PC-3 (cell line): ENCODE measurements at regions of chr16 and their contacts with region 1.

Region 1: GRCh38 chr16:72467157-72467759 is 295.3 kb upstream of the PMFBP1 start:
- DNase-seq: peak; percentile 54
- ATAC-seq: peak; percentile 60
- H3K4me3 ChIP-seq: no peak overlapping the region
- H3K27ac ChIP-seq: no peak overlapping the region
- H3K4me1 ChIP-seq: no peaks in the 10 kb centered on the region
- H3K27me3 ChIP-seq: no peaks in the 10 kb centered on the region
- CTCF ChIP-seq: peak; percentile 70

Region 2: GRCh38 chr16:72124761-72125634 is 342.3 kb before region 1 on chr16:
- CTCF ChIA-PET with region 1: no interaction called
- POLR2A ChIA-PET with region 1: no interaction called
- intact Hi-C with region 1: loop called (anchors 1 kb)
- DNase-seq: peak; percentile 61
- ATAC-seq: peak; percentile 86
- H3K4me3 ChIP-seq: no peak overlapping the region
- H3K27ac ChIP-seq: no peak overlapping the region
- H3K4me1 ChIP-seq: no peaks in the 10 kb centered on the region
- H3K27me3 ChIP-seq: no peaks in the 10 kb centered on the region
- CTCF ChIP-seq: peak; percentile 76

Region 3: GRCh38 chr16:72241930-72242329 is 225.3 kb before region 1 on chr16:
- CTCF ChIA-PET with region 1: no interaction called
- POLR2A ChIA-PET with region 1: no interaction called
- intact Hi-C with region 1: loop called (anchors 1 kb)
- DNase-seq: peak; percentile 62
- ATAC-seq: peak; percentile 87
- H3K4me3 ChIP-seq: no peak overlapping the region
- H3K27ac ChIP-seq: no peak overlapping the region
- H3K4me1 ChIP-seq: peaks cover 2% of the 10 kb centered on the region; the same call in 1 of the 2 replicates
- H3K27me3 ChIP-seq: no peaks in the 10 kb centered on the region
- CTCF ChIP-seq: peak; percentile 73

Region 4: DNA sequence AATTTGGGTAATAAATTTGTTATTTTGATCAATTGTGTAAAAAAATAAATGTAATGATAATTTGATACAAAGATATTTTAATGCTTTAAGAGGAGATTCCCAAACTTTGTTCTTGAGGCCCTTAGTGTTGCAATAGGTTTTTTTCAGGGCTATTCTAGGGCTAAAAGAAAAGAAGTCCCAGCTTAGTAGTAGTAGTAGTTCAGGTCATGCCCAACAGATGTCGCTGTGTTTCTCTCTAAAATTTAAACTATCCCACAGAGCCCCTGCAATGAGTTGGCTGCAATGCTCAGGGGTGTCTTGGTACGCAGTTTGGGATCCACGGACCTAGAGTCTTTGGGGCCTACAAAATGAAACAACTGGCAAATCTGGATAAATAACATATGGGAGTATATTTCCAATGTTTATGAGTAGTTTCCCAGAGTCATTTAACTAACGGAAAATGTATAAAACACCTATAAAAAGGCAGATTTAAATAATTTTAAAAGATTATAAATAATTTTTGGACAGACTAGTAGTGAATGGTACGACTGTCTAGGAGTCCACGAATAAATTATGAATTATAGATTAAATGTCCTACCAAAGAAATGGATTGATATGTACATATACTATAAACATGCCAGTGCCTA is 66.9 kb before region 1 on chr16:
- CTCF ChIA-PET with region 1: interaction called, 6 read pairs
- POLR2A ChIA-PET with region 1: no interaction called
- intact Hi-C with region 1: loop called (anchors 1 kb)
- DNase-seq: peak; percentile 58
- ATAC-seq: peak; percentile 67
- H3K4me3 ChIP-seq: no peak overlapping the region
- H3K27ac ChIP-seq: no peak overlapping the region
- H3K4me1 ChIP-seq: no peaks in the 10 kb centered on the region
- H3K27me3 ChIP-seq: no peaks in the 10 kb centered on the region
- CTCF ChIP-seq: peak; percentile 70

Region 5: GRCh38 chr16:72434159-72434558 is 33.1 kb before region 1 on chr16:
- CTCF ChIA-PET with region 1: no interaction called
- POLR2A ChIA-PET with region 1: no interaction called
- intact Hi-C with region 1: no loop called
- DNase-seq: no peak
- ATAC-seq: no peak
- H3K4me3 ChIP-seq: no peak overlapping the region
- H3K27ac ChIP-seq: no peak overlapping the region
- H3K4me1 ChIP-seq: no peaks in the 10 kb centered on the region
- H3K27me3 ChIP-seq: no peaks in the 10 kb centered on the region
- CTCF ChIP-seq: no peak